A549 (cell line): ENCODE measurements at regions of chr10 and their contacts with region 1.

Region 1: GRCh38 chr10:95601116-95601719 is 40.0 kb upstream of the SORBS1 start:
- DNase-seq: peak; percentile 76 to 87
- ATAC-seq: peak; percentile 96 to 98
- H3K4me3 ChIP-seq: no peak overlapping the region
- H3K27ac ChIP-seq: no peak overlapping the region
- H3K4me1 ChIP-seq: no peaks in the 10 kb centered on the region
- CTCF ChIP-seq: peak; percentile 97
- EP300 ChIP-seq: no peak
- POLR2A ChIP-seq: no peak
- RAD21 ChIP-seq: peak; percentile 97 to 98

Region 2: DNA sequence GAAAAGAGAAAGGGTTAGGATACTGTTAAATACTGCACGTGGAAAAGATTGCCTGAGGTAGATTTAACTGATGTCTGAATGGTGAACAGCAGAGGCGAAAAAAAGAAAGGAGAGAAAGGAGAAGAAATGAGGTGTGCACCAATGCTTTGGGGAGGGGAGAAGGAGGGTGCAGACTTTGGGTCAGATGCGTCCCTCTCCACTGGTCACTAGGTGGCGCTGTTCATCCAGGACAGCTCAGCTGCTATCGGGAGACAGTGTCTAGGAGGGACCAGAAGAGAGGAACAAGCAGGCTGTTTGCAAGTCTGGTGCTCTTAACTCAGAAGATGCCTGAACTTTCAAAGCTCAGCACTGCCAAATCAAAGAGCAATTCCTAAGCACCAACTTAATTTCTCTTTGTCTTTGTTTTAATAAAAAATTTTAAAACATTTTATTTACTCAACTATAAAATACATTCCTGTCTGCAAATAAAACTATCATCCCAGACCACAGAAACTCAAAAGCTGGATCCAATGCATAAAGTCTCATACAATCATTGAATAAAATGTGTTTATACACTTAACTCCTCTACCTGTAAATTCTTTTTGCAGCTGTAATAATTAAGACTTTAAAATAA is 226.5 kb before region 1 on chr10:
- CTCF ChIA-PET with region 1: interaction called, 94 read pairs
- POLR2A ChIA-PET with region 1: no interaction called
- DNase-seq: peak; percentile 77 to 84
- ATAC-seq: peak; percentile 97 to 99
- H3K4me3 ChIP-seq: no peak overlapping the region
- H3K27ac ChIP-seq: no peak overlapping the region
- H3K4me1 ChIP-seq: no peaks in the 10 kb centered on the region
- CTCF ChIP-seq: peak; percentile 91
- EP300 ChIP-seq: no peak
- POLR2A ChIP-seq: no peak
- RAD21 ChIP-seq: peak; percentile 85 to 94

Region 3: DNA sequence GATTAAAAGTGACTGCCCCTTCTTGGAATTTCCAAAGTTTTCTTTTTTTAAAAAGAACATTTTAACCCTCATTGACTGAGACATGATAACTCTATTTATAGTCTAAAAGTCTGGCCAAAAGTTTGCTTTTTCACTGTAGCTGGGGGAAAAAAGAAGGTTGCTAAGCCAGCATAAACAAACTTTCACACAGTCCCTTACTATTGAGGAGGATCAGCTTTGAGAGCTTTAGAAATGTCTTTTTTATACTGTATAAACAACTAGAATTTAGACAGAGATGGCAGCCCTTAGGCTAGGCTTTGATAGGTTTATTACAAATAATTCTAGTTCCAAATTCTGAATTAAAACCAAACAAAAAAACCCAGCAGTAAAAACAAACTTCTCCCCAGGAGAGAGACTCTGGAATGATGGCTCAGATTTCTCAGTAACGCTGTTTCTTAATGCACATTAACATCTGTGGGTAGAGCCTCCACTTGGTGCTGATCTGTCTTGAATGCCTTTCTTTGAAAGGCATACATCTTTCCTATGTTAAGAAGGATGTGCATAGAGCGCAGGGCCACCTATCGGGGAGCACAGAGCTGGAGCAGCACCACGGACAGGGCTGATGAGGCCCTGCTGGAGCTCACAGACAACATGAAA is 209.5 kb before region 1 on chr10:
- CTCF ChIA-PET with region 1: interaction called, 10 read pairs
- POLR2A ChIA-PET with region 1: no interaction called
- DNase-seq: peak; percentile 8 to 23
- ATAC-seq: peak; percentile 54 to 74; a peak in 5 of 6 replicates
- H3K4me3 ChIP-seq: no peak overlapping the region
- H3K27ac ChIP-seq: no peak overlapping the region
- H3K4me1 ChIP-seq: peaks cover 18% of the 10 kb centered on the region
- CTCF ChIP-seq: no peak
- EP300 ChIP-seq: no peak
- POLR2A ChIP-seq: no peak
- RAD21 ChIP-seq: no peak

Region 4: GRCh38 chr10:95437669-95438068 is 163.5 kb before region 1 on chr10:
- CTCF ChIA-PET with region 1: interaction called, 254 read pairs
- POLR2A ChIA-PET with region 1: no interaction called
- DNase-seq: no peak
- ATAC-seq: no peak
- H3K4me3 ChIP-seq: no peak overlapping the region
- H3K27ac ChIP-seq: no peak overlapping the region
- H3K4me1 ChIP-seq: no peaks in the 10 kb centered on the region
- CTCF ChIP-seq: no peak
- EP300 ChIP-seq: no peak
- POLR2A ChIP-seq: no peak
- RAD21 ChIP-seq: no peak

Region 5: DNA sequence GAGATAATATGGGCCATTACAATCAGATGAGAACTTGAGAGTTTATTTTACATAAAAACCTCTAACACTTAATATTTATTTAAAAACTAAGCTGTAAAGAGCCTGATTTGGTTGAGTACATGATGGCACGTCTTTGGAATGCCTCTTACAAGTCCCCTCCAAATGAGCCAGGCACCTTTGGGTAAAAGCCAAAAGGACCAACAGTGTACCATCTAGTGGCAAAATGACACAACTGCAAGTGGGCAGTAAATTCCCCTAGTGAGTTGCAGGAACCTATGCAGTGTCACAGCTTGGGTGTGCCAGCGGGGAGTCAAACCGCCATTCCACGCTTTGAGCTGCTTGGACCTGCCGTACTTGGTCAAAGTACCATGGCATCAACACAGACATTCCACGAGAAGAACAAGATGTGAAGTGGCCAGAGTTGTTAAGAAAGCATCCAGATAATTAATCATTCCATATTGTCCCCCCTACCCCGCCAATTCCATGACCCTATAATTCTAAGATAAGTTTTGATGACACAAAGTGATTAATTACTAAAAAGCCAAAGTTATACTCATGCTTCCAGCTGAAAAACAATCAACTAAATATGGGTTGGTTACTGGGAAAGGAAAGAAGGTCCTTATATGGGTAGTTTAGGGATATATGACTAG is 155.3 kb before region 1 on chr10:
- CTCF ChIA-PET with region 1: interaction called, 16 read pairs
- POLR2A ChIA-PET with region 1: no interaction called
- DNase-seq: peak; percentile 81 to 92
- ATAC-seq: peak; percentile 84 to 91
- H3K4me3 ChIP-seq: no peak overlapping the region
- H3K27ac ChIP-seq: peak overlapping the region; percentile 42 to 43; a peak in 4 of 6 replicates
- H3K4me1 ChIP-seq: peaks cover 17% of the 10 kb centered on the region
- CTCF ChIP-seq: peak; percentile 75
- EP300 ChIP-seq: no peak
- POLR2A ChIP-seq: no peak
- RAD21 ChIP-seq: peak; percentile 49 to 52; a peak in 4 of 5 replicates

Region 6: GRCh38 chr10:95469676-95470075 is 131.5 kb before region 1 on chr10:
- CTCF ChIA-PET with region 1: no interaction called
- POLR2A ChIA-PET with region 1: no interaction called
- DNase-seq: no peak
- ATAC-seq: no peak
- H3K4me3 ChIP-seq: no peak overlapping the region
- H3K27ac ChIP-seq: no peak overlapping the region
- H3K4me1 ChIP-seq: no peaks in the 10 kb centered on the region
- CTCF ChIP-seq: no peak
- EP300 ChIP-seq: no peak
- POLR2A ChIP-seq: no peak
- RAD21 ChIP-seq: no peak

Region 7: DNA sequence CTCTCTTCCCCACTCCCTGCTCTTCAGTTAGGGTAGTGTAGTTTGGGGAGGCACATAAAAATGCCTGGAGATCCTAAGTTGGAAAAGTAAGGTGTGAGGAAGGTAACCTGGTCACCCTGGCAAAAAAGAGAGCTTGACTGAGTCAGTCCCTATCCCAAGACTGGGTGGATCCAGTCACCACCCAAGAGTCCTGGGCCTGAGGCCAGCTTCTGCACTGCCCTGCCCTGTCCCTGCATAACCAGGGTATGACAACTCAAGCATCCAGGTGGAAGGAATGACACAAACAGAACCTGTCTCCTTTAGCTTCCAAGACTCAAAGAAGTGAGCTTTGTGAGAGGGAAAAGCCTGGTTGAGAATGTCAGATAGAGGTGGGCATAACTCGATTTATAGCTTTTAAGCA is 13.2 kb before region 1 on chr10:
- CTCF ChIA-PET with region 1: interaction called, 52 read pairs
- POLR2A ChIA-PET with region 1: no interaction called
- DNase-seq: no peak
- ATAC-seq: no peak
- H3K4me3 ChIP-seq: no peak overlapping the region
- H3K27ac ChIP-seq: no peak overlapping the region
- H3K4me1 ChIP-seq: no peaks in the 10 kb centered on the region
- CTCF ChIP-seq: no peak
- EP300 ChIP-seq: no peak
- POLR2A ChIP-seq: no peak
- RAD21 ChIP-seq: no peak

Region 8: DNA sequence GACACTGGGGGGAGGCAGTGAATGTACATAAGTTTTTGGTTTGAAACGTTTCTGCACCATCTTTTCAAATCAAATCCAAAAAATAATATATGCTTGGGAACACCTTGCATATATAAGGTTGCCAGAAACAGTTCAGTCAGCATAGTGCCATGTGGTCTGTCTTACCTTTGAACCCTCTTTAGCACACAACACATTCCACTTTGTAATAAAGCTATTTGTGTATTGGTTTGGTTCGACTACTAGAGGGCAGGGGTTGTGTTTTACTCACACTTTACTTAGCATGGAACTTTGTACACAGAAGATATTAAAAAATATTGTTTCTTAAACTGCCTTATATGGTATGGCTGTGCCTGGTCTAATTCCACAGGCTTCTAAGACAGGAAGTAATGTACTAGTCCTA is 12.1 kb after region 1 on chr10:
- CTCF ChIA-PET with region 1: interaction called, 10 read pairs
- POLR2A ChIA-PET with region 1: no interaction called
- DNase-seq: no peak
- ATAC-seq: no peak
- H3K4me3 ChIP-seq: no peak overlapping the region
- H3K27ac ChIP-seq: no peak overlapping the region
- H3K4me1 ChIP-seq: no peaks in the 10 kb centered on the region
- CTCF ChIP-seq: no peak
- EP300 ChIP-seq: no peak
- POLR2A ChIP-seq: no peak
- RAD21 ChIP-seq: no peak

Region 9: DNA sequence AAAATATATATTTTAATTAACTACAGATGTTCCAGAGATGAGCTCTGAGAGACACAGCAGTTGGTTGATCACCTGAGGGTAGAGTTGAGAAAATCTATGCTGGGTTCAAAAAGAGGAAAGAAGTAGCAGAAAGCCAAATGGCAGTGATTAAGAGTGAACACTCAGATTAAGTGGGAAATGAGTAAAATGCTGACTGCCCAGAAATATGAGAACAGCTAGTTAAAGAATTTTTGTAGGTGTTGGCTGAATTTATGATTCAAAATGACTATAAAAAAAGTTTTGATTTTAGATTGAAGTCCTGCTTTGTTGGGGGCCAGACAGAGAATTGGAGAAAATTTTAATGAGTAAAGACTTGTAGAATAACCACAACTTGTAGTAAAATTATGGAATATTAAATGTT is 82.7 kb after region 1 on chr10:
- CTCF ChIA-PET with region 1: no interaction called
- POLR2A ChIA-PET with region 1: no interaction called
- DNase-seq: no peak
- ATAC-seq: no peak
- H3K4me3 ChIP-seq: no peak overlapping the region
- H3K27ac ChIP-seq: no peak overlapping the region
- H3K4me1 ChIP-seq: no peaks in the 10 kb centered on the region
- CTCF ChIP-seq: no peak
- EP300 ChIP-seq: no peak
- POLR2A ChIP-seq: no peak
- RAD21 ChIP-seq: no peak